ENCODE measurements at regions of chr1 and their contacts with region 1.

Region 1: GRCh38 chr1:155859234-155859829 is at the start of gene SYT11:
- DNase-seq: peak; percentile 96
- ATAC-seq: peak; percentile 94
- H3K4me3 ChIP-seq: peak within 1 kb of the TSS; percentile 39 to 89 (median 65)
- H3K4me3 Mint-ChIP-seq: peak within 1 kb of the TSS; percentile 97
- H3K27ac ChIP-seq: peak within 1 kb of the TSS; percentile 60 to 68
- H3K27ac Mint-ChIP-seq: peak within 1 kb of the TSS; percentile 96
- H3K4me1 ChIP-seq: peaks cover 12 to 40% of the 10 kb centered on the region in 2 donors
- H3K4me1 Mint-ChIP-seq: peaks cover 29% of the 10 kb centered on the region
- H3K27me3 ChIP-seq: peaks cover 0 to 4% (median 2%) of the 10 kb centered on the region in 4 experiments
- H3K27me3 Mint-ChIP-seq: peaks cover 11% of the 10 kb centered on the region
- CTCF ChIP-seq: peak; percentile 31
- total RNA-seq, gene SYT11: 6.2 and 6.6 TPM in 2 replicates

Region 2: GRCh38 chr1:154183045-154183915 is 1676.1 kb before region 1 on chr1:
- CTCF ChIA-PET with region 1: no interaction called
- POLR2A ChIA-PET with region 1: no interaction called
- intact Hi-C with region 1: loop called (anchors 5 kb)
- DNase-seq: peak; percentile 94
- ATAC-seq: peak; percentile 73
- H3K4me3 ChIP-seq: peak overlapping the region; percentile 54 to 99 (median 98)
- H3K4me3 Mint-ChIP-seq: peak overlapping the region; percentile 91
- H3K27ac ChIP-seq: peak overlapping the region; percentile 91 to 96
- H3K27ac Mint-ChIP-seq: peak overlapping the region; percentile 98
- H3K4me1 ChIP-seq: peaks cover 39 to 46% of the 10 kb centered on the region in 2 donors
- H3K4me1 Mint-ChIP-seq: peaks cover 48% of the 10 kb centered on the region
- H3K27me3 ChIP-seq: no peaks in the 10 kb centered on the region
- H3K27me3 Mint-ChIP-seq: peaks cover 4% of the 10 kb centered on the region
- CTCF ChIP-seq: no peak

Region 3: DNA sequence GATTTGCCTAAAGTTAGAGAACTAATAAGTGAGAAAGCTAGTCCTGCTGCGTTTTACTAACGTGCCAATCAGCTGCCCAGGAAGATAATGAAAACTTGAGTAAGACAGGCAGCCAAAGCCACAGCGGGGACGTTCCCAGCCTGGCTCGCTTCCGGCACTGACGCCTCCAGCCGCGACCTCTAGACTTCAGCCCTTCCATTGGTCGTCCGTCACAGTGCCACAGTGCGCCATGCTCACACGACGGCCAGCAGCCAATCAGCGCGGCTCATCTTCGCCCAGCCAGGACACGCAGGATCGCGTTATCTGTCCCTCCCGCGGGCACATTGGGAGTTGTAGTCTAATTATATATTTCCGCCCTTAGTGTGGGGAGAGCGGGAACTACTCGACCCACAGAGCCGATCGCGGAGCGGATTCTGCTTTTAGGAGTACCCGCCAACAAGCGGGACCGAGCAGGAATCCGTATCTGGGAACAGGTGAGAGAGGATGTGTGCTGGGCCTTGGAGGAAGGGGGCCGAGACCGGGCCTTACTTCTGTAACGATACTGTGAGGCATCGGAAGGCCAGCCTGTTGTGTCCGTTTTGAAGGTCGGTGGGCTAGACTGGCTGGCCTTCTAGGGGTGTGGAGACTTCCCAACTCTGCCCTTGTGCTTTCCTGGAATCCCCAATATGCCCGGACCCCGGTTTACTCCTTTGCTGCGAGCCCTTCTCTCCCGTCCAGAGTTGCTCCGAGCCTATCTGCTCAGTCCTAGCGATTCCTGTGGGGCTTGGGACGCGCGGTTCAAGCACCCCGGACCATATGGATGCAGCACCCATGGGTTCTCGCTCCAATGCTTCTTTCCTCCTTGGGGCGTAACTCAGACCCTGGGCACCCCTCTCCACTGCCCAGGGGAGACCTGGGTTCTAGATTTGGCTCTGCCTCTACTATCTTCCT is 550.6 kb before region 1 on chr1 and contains the start of gene FDPS:
- CTCF ChIA-PET with region 1: no interaction called
- POLR2A ChIA-PET with region 1: no interaction called
- intact Hi-C with region 1: loop called (anchors 5 kb)
- DNase-seq: peak; percentile 99
- ATAC-seq: peak; percentile 99
- H3K4me3 ChIP-seq: peak within 1 kb of the TSS; percentile 62 to 100 (median 88)
- H3K4me3 Mint-ChIP-seq: peak within 1 kb of the TSS; percentile 93
- H3K27ac ChIP-seq: peak within 1 kb of the TSS; percentile 91 to 94
- H3K27ac Mint-ChIP-seq: peak within 1 kb of the TSS; percentile 93
- H3K4me1 ChIP-seq: peaks cover 10 to 23% of the 10 kb centered on the region in 2 donors
- H3K4me1 Mint-ChIP-seq: peaks cover 27% of the 10 kb centered on the region
- H3K27me3 ChIP-seq: no peaks in the 10 kb centered on the region
- H3K27me3 Mint-ChIP-seq: no peaks in the 10 kb centered on the region
- CTCF ChIP-seq: no peak
- total RNA-seq, gene FDPS: 128 and 141 TPM in 2 replicates

Region 4: DNA sequence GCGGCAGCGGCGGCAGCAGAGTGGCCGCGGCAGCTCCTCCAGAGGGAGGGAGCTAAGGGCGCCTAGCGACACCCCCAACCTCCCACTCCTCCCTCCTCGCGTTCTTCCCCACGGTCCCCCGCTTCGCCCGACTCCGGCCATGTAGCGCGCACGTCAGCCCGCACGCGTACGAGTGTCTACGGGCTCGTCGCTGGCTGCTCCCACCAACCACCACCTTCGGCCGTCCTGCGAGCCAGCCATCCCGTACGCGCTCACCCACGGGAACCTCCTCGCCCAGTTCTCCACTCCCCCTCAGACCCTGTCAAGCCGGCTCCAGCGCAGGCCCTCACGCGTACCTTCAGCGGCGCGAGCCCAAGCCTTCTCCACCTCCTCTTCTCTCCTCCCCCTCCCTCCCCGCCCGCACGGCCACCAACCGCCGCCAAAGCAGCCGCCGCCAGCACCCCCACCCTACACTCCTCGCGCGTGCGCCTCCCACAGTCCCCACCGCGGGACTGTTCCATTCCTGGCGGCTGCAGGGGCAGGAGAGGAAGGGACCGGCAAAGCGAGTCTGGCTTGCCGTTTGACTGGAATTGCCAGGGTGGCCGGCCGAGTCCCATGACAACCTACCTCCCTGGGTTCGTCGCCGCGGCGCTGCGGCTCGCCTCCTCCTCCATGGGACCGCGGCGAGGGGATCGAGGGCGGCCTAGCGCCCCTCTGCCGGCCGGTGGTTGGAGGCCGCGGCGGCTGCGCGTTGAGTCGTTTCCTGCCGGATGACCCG is 170.8 kb before region 1 on chr1 and contains the start of gene YY1AP1:
- CTCF ChIA-PET with region 1: no interaction called
- POLR2A ChIA-PET with region 1: no interaction called
- intact Hi-C with region 1: loop called (anchors 2 kb)
- DNase-seq: peak; percentile 96
- ATAC-seq: peak; percentile 85
- H3K4me3 ChIP-seq: peak within 1 kb of the TSS; percentile 80 to 97 (median 95)
- H3K4me3 Mint-ChIP-seq: peak within 1 kb of the TSS; percentile 97
- H3K27ac ChIP-seq: peak within 1 kb of the TSS; percentile 72 to 97
- H3K27ac Mint-ChIP-seq: peak within 1 kb of the TSS; percentile 97
- H3K4me1 ChIP-seq: peaks cover 16 to 19% of the 10 kb centered on the region in 2 donors
- H3K4me1 Mint-ChIP-seq: peaks cover 52% of the 10 kb centered on the region
- H3K27me3 ChIP-seq: no peaks in the 10 kb centered on the region
- H3K27me3 Mint-ChIP-seq: no peaks in the 10 kb centered on the region
- CTCF ChIP-seq: no peak
- total RNA-seq, gene YY1AP1: 132 and 156 TPM in 2 replicates

Region 5: DNA sequence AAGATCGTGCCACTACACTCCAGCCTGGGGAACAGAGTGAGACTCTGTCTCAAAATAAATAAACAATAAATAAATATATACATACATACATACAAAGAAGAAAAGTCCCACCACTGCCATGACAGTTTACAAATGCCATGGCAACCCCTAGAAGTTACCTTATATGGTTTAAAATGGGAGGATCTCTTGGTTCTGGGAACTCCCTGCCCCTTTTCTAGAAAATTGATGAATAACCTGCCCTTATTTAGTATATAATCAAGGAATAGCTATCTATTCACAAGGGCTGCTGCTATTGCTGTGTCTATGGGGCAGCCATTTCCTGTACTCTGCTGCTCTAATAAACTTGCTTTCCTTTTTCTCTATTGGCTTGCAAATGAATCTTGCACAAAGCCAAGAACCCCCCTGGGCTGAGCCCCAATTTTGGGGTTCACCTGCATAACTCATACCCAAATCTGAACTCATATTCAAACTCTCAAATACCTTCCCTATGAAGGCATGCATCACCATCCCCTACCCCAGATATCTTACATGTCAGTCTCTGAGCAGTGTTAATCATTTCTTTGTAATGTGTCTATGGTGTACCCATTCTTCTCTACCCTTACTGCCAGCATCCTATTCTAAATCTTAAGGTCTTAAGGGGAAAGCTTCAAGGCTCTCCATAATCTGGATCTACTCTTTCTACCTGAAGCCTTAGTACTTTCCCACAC is 11.4 kb before region 1 on chr1:
- CTCF ChIA-PET with region 1: no interaction called
- POLR2A ChIA-PET with region 1: no interaction called
- intact Hi-C with region 1: no loop called
- DNase-seq: no peak
- ATAC-seq: no peak
- H3K4me3 ChIP-seq: no peak overlapping the region
- H3K4me3 Mint-ChIP-seq: no peak overlapping the region
- H3K27ac ChIP-seq: peak overlapping the region in 1 of 2 donors; percentile 4
- H3K27ac Mint-ChIP-seq: no peak overlapping the region
- H3K4me1 ChIP-seq: no peaks in the 10 kb centered on the region
- H3K4me1 Mint-ChIP-seq: peaks cover 45% of the 10 kb centered on the region
- H3K27me3 ChIP-seq: no peaks in the 10 kb centered on the region
- H3K27me3 Mint-ChIP-seq: no peaks in the 10 kb centered on the region
- CTCF ChIP-seq: no peak

Region 6: DNA sequence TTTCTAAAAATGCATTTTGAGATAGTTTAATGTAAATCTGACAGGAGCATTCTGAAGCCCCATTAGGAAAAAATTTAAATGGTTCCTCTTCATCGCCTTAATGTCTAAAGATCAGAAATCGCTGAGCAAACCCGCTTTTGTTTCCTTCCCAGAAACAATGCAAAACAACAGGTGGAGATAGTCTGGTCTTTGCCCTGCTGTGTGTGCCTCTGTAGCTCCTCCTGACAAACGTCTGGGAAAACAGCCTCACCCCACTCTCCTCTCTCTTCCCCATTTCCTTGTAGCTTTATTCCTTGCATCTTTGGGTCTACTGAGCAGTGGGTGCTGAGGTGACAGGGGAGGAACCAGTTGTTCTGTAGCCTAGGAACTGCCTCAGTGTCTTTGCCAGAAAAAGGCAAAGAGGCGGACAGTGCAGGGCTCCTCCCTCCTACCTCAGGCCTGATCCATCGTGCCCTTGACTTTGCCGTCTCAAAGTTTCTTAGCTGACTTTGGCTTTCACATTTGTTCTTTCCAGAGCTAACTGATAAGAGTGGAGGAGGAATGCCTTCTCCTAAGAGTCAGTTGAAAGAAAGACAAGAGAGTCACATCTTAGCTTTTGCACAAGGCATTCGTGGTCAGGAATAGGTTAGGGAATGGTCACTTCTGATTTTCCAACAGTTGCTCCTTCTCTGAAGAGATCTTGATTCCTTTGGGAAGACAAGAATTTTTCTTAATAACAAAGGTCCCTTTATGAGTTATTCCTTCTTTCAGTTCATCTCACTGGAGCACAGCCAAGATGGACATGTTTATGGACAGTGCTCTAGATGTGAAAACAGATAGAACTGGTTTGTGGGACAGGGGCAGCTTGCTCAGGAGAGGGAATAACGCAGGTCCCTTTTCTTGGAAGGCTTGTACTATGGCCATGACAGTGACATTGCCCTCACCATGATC is 25.0 kb after region 1 on chr1:
- CTCF ChIA-PET with region 1: no interaction called
- POLR2A ChIA-PET with region 1: no interaction called
- intact Hi-C with region 1: no loop called
- DNase-seq: no peak
- ATAC-seq: no peak
- H3K4me3 ChIP-seq: no peak overlapping the region
- H3K4me3 Mint-ChIP-seq: no peak overlapping the region
- H3K27ac ChIP-seq: no peak overlapping the region
- H3K27ac Mint-ChIP-seq: no peak overlapping the region
- H3K4me1 ChIP-seq: peaks cover 8% of the 10 kb centered on the region in 2 donors
- H3K4me1 Mint-ChIP-seq: peaks cover 9% of the 10 kb centered on the region
- H3K27me3 ChIP-seq: no peaks in the 10 kb centered on the region
- H3K27me3 Mint-ChIP-seq: no peaks in the 10 kb centered on the region
- CTCF ChIP-seq: no peak

Region 7: DNA sequence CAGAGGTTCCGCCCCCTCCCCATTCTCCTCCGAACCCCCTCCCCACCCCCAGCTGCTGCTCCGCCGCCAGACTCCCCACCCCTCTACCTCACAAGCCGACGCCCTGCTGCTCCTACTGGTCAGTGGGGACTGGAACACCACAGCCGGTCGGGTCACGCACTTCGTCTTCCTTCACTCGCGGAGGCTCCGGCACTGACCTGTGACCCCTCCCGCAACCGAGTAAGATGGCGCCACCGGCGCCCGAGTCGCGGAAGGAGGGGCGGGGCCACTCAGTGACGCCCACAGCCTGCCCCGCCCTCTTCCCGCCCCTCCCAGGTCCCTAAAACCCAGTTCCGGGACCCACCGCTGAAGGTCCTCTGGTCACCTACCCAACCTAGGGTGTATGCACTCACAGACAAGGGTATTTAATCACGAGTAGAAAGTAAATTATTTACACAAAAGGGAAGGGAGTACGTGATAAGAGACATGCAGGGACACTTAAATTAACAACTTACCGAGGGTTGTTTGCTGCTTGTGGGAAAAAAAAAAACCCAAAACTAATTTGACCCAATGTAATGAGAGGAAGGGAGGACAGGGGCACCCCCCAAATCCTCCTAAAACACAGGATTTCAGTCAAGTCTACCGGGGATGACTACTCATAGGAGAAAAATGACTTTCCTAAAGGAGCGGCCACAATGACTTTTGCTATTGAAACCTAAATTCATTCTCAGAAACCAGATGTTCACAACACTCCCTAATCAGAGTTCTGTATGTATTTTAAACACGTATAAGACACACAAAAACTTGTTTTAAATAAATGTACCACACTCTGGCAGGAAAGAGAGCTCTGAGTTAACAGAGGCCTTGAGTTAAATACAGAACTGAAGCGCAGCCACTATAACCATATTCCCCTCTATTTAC is 52.1 kb after region 1 on chr1 and contains the start of gene RIT1:
- CTCF ChIA-PET with region 1: no interaction called
- POLR2A ChIA-PET with region 1: no interaction called
- intact Hi-C with region 1: loop called (anchors 1 kb)
- DNase-seq: peak; percentile 91
- ATAC-seq: peak; percentile 98
- H3K4me3 ChIP-seq: peak within 1 kb of the TSS; percentile 64 to 90 (median 71)
- H3K4me3 Mint-ChIP-seq: peak within 1 kb of the TSS; percentile 96
- H3K27ac ChIP-seq: peak within 1 kb of the TSS; percentile 59 to 79
- H3K27ac Mint-ChIP-seq: peak within 1 kb of the TSS; percentile 97
- H3K4me1 ChIP-seq: peaks cover 14 to 16% of the 10 kb centered on the region in 2 donors
- H3K4me1 Mint-ChIP-seq: peaks cover 23% of the 10 kb centered on the region
- H3K27me3 ChIP-seq: no peaks in the 10 kb centered on the region
- H3K27me3 Mint-ChIP-seq: no peaks in the 10 kb centered on the region
- CTCF ChIP-seq: no peak
- total RNA-seq, gene RIT1: 43.4 and 45.7 TPM in 2 replicates

Region 8: DNA sequence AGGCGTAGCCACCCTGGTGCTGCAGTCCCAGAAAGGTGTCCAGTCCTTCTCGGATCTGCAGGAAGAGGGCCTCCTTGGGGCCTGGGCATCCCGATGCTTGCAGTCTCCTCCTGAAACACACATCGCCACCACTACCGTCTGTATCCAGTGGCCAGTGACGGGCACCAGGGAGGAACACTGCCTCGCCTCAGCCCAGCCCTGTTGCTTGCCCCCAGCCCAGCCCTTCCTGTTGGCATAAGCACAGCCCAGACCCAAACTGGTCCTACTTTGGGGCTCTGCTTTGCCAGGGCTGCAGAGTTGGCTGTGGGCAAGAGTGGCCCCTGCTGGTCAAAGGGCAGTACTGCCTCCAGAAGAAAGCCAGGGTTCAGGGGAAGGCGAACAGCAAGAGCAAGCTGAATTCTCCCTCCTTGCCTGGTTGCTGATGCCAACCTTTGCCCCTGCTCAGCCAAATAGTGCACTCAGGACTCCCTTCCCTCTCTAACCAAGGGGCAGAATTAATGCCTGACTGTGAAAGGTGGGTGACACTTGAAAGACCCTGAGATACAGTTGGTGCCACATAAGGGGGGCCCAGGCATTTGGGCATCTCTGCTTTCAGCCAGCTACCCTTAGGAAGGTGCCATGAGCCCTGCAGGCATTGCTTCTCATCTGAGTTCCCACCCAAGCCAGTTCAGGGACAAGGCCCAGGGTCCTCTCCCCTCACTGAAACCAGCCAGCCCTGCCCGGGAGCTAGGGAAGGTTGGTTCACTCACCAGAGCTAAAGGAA is 130.1 kb after region 1 on chr1:
- CTCF ChIA-PET with region 1: interaction called, 6 read pairs
- POLR2A ChIA-PET with region 1: no interaction called
- intact Hi-C with region 1: loop called (anchors 2 kb)
- DNase-seq: peak; percentile 88
- ATAC-seq: peak; percentile 100
- H3K4me3 ChIP-seq: peak overlapping the region in 2 of 5 experiments; percentile 8 to 19
- H3K4me3 Mint-ChIP-seq: no peak overlapping the region
- H3K27ac ChIP-seq: peak overlapping the region; percentile 11 to 32
- H3K27ac Mint-ChIP-seq: peak overlapping the region; percentile 73
- H3K4me1 ChIP-seq: peaks cover 24 to 32% of the 10 kb centered on the region in 2 donors
- H3K4me1 Mint-ChIP-seq: peaks cover 24% of the 10 kb centered on the region
- H3K27me3 ChIP-seq: no peaks in the 10 kb centered on the region
- H3K27me3 Mint-ChIP-seq: no peaks in the 10 kb centered on the region
- CTCF ChIP-seq: peak; percentile 98

Region 9: DNA sequence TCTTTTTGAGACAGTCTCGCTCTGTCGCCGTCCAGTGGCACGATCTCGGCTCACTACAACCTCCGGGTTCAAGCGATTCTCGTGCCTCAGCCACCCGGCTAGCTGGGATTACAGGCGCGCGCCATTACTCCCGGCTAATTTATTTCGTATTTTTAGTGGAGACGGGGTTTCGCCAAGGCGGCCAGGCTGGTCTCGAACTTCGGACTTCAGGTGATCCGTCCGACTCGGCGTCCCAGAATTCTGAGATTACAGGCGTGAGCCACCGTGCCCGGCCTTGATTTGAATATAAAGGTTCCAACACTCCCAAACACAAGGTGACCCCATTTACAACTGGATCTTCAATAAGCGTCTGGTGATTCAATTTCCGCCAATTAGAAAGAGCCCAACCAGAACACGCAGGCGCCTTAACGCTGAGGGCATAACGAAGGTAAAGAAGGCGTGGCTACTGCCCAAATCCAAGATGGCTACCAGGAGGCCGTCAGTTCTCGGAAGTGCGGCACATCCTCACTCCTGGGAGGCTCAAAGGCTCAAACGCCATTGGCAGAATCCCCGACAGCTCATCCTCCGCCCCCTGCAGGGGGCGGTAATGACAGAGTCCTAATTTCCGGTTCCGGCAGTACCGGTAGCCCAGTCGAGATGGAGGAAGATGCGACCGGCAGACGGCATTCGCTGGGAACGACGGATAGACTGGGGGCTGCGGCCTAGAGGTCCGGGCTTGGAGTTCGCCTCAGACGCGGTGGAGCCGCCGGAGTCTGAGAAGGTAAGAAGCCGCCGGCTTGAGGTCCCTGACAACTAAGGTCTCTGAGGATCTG is 334.4 kb after region 1 on chr1 and contains the start of gene SLC25A44:
- CTCF ChIA-PET with region 1: no interaction called
- POLR2A ChIA-PET with region 1: no interaction called
- intact Hi-C with region 1: loop called (anchors 5 kb)
- DNase-seq: peak; percentile 99
- ATAC-seq: peak; percentile 99
- H3K4me3 ChIP-seq: peak within 1 kb of the TSS; percentile 61 to 94 (median 84)
- H3K4me3 Mint-ChIP-seq: peak within 1 kb of the TSS; percentile 92
- H3K27ac ChIP-seq: peak within 1 kb of the TSS; percentile 80 to 86
- H3K27ac Mint-ChIP-seq: peak within 1 kb of the TSS; percentile 78
- H3K4me1 ChIP-seq: peaks cover 10 to 14% of the 10 kb centered on the region in 2 donors
- H3K4me1 Mint-ChIP-seq: peaks cover 36% of the 10 kb centered on the region
- H3K27me3 ChIP-seq: no peaks in the 10 kb centered on the region
- H3K27me3 Mint-ChIP-seq: no peaks in the 10 kb centered on the region
- CTCF ChIP-seq: peak; percentile 67
- total RNA-seq, gene SLC25A44: 26.6 and 27.2 TPM in 2 replicates

Region 10: DNA sequence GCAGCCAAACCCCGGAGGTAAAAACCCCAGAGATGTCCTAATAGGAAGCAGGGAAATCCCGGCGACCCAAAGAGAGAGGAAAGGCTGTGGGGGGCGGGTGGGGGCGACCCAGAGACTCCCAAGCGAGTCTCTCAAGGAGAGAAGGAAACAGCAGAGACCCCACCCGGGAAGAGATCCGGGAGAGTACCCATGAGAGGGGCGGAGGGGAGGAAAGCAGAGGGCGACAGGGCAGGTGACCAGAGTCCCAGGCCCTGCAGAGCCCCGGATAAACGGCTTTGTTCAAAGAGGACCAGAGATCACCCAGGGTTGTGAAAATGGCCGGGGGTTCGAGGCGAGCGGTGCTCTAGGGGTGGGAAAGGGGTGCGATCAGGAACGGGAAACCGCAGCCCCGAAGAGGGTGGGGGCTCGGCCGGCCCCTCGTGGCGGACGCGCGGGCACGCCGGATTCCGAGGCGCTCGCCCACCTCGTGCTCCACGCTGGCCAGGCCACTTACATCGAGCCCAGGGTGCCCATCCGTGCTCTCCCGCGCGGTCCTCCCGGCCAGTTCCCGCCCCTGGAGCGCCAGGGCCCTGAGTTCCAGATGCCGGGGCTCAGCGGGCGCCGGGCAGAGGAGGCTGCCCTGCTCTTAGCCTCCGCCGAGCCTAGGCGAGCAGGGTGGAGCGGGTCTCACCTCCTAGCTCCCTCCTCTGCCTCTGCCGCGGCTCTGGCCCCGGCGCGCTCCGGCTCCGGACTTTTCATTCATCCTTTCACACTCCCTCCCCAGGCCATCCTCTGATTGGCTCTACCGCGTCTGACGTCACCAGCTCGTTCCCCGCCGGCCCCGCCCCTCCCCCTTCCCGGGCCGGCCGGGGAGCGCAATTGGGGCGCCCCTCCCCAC is 562.0 kb after region 1 on chr1:
- CTCF ChIA-PET with region 1: no interaction called
- POLR2A ChIA-PET with region 1: no interaction called
- intact Hi-C with region 1: no loop called
- DNase-seq: peak; percentile 79
- ATAC-seq: peak; percentile 73
- H3K4me3 ChIP-seq: peak overlapping the region in 4 of 5 experiments; percentile 41 to 65 (median 61)
- H3K4me3 Mint-ChIP-seq: peak overlapping the region; percentile 92
- H3K27ac ChIP-seq: no peak overlapping the region
- H3K27ac Mint-ChIP-seq: peak overlapping the region; percentile 21
- H3K4me1 ChIP-seq: peaks cover 27 to 29% of the 10 kb centered on the region in 2 donors
- H3K4me1 Mint-ChIP-seq: peaks cover 28% of the 10 kb centered on the region
- H3K27me3 ChIP-seq: peaks cover 0 to 82% (median 44%) of the 10 kb centered on the region in 4 experiments
- H3K27me3 Mint-ChIP-seq: peaks cover 84% of the 10 kb centered on the region
- CTCF ChIP-seq: no peak